Aorta (tissue), 5 donors: ENCODE measurements at regions of chr3 and their contacts with region 1.

Region 1: GRCh38 chr3:155870133-155870944 is at the start of gene GMPS:
- DNase-seq: peak; percentile 97 to 98
- ATAC-seq: peak; percentile 99
- H3K4me3 ChIP-seq: peak within 1 kb of the TSS; percentile 69 to 87
- H3K27ac ChIP-seq: peak within 1 kb of the TSS; percentile 57 to 71
- H3K4me1 ChIP-seq: no peaks in the 10 kb centered on the region
- H3K27me3 ChIP-seq: no peaks in the 10 kb centered on the region
- total RNA-seq, gene GMPS: 40.2 to 43.2 TPM

Region 2: GRCh38 chr3:155805802-155806618 is 64.3 kb before region 1 on chr3 and contains the start of gene C3orf33:
- intact Hi-C with region 1: loop called in 1 of 2 experiments (anchors 10 kb)
- DNase-seq: peak; percentile 73 to 90
- ATAC-seq: peak; percentile 96
- H3K4me3 ChIP-seq: peak within 1 kb of the TSS; percentile 44 to 75
- H3K27ac ChIP-seq: peak within 1 kb of the TSS in 1 of 2 donors; percentile 43
- H3K4me1 ChIP-seq: no peaks in the 10 kb centered on the region
- H3K27me3 ChIP-seq: no peaks in the 10 kb centered on the region
- total RNA-seq, gene C3orf33: 1.9 to 2.2 TPM

Region 3: GRCh38 chr3:155854141-155854940 is 16.0 kb before region 1 on chr3 and contains the start of gene SLC33A1:
- intact Hi-C with region 1: loop called (anchors 1 to 2 kb)
- DNase-seq: peak; percentile 100
- ATAC-seq: peak; percentile 100
- H3K4me3 ChIP-seq: peak within 1 kb of the TSS; percentile 72 to 76
- H3K27ac ChIP-seq: peak within 1 kb of the TSS; percentile 52 to 87
- H3K4me1 ChIP-seq: peaks cover 0 to 18% of the 10 kb centered on the region in 2 donors
- H3K27me3 ChIP-seq: no peaks in the 10 kb centered on the region
- total RNA-seq, gene SLC33A1: 27.1 to 28.5 TPM

Region 4: GRCh38 chr3:155912579-155913190 is 42.3 kb after region 1 on chr3:
- intact Hi-C with region 1: loop called in 1 of 2 experiments (anchors 5 kb)
- DNase-seq: no peak
- ATAC-seq: peak; percentile 76
- H3K4me3 ChIP-seq: no peak overlapping the region
- H3K27ac ChIP-seq: peak overlapping the region; percentile 72 to 78
- H3K4me1 ChIP-seq: no peaks in the 10 kb centered on the region
- H3K27me3 ChIP-seq: no peaks in the 10 kb centered on the region